Activated naive CD8-positive, alpha-beta T cell treated with anti-CD3 and anti-CD28 coated beads, Interleukin-2, amount 10 ng/mL, durations not matched to agents 7 days and 5 days (primary cell): ENCODE measurements at regions of chr1 and their contacts with region 1.

Region 1: DNA sequence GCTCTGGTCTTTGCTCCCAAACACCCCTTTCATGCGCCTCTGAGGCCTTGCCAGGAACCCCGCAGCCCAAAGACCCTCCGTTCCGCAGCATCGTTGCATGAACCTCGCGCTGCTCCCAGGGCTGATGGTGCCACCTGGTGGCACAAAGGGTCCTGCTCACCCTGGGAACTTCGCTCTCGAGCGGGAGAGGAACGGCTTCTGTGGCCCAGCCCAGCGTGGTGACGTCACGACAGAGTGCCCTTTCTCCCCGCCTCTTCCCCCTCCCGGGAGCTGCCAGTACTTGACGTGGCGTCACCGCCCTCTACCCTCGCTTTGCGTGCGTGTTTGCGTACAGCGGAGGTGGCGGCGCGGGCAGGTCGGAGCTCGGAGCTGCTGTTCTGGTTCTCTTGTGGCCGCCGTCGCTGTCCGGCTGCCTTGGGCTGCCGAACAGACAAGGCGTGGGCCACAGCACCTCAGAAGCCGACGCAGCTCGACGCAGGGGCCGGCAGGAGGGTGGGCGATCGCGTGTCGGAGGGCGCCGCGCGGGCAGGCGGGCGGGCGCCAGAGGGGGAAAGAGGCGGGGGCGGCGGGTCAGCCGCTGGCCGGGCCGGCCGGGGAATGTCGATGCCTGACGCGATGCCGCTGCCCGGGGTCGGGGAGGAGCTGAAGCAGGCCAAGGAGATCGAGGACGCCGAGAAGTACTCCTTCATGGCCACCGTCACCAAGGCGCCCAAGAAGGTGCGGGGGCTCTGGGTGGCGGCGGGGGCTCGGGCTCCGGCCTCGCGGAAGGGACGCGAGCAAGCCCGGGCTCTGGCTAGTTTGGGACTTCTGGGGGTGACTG is at the start of gene AHCYL1:
- DNase-seq: peak; percentile 98
- ATAC-seq: peak; percentile 98
- H3K4me3 Mint-ChIP-seq: peak within 1 kb of the TSS; percentile 98
- H3K27ac Mint-ChIP-seq: peak within 1 kb of the TSS; percentile 95
- H3K4me1 Mint-ChIP-seq: peaks cover 29% of the 10 kb centered on the region
- H3K27me3 Mint-ChIP-seq: peaks cover 2% of the 10 kb centered on the region
- total RNA-seq, gene AHCYL1: 53.6 to 55.4 TPM

Region 2: GRCh38 chr1:109640285-109640865 is 344.3 kb before region 1 on chr1:
- POLR2A ChIA-PET with region 1: interaction called, 11 read pairs
- DNase-seq: peak; percentile 93
- ATAC-seq: peak; percentile 71
- H3K4me3 Mint-ChIP-seq: no peak overlapping the region
- H3K27ac Mint-ChIP-seq: no peak overlapping the region
- H3K4me1 Mint-ChIP-seq: peaks cover 8% of the 10 kb centered on the region
- H3K27me3 Mint-ChIP-seq: peaks cover 3% of the 10 kb centered on the region

Region 3: DNA sequence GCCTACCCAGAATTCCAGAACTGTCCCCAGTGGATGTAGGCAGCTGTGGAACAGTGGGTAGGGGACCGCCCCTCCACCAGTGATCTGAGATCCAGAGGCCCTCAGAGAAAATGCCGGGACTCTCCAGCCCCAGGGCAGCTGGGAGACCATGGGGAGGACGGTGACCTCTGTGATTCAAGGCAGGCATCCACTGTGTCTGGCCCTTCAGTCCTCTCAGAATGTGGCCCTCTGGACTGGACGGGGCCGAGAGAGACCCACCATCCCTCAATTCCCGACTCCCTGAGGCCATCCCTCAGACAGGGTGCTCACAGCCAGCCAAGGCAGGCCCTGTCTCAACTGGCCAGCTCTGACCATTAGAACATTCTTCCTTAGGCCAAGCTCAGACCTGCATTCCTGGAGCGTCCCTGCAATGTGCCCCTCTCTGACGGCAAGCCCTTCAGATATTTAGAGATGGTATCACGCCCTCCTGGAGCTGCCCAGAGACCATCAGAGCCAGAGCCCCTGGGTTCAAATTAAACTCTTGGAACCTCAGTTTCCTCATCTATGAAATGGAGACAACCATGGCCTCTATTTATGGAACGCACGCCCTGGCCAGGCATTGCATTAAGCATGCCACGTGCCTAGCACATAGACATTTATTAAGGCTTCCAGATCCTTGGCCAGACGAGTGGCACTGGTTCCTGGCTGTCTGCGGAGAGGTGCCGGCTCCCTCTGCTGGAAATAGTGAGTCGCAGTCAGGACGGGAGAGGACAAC is 211.3 kb before region 1 on chr1:
- POLR2A ChIA-PET with region 1: interaction called, 34 read pairs
- DNase-seq: peak; percentile 65
- ATAC-seq: peak; percentile 87
- H3K4me3 Mint-ChIP-seq: no peak overlapping the region
- H3K27ac Mint-ChIP-seq: no peak overlapping the region
- H3K4me1 Mint-ChIP-seq: peaks cover 16% of the 10 kb centered on the region
- H3K27me3 Mint-ChIP-seq: peaks cover 3% of the 10 kb centered on the region

Region 4: DNA sequence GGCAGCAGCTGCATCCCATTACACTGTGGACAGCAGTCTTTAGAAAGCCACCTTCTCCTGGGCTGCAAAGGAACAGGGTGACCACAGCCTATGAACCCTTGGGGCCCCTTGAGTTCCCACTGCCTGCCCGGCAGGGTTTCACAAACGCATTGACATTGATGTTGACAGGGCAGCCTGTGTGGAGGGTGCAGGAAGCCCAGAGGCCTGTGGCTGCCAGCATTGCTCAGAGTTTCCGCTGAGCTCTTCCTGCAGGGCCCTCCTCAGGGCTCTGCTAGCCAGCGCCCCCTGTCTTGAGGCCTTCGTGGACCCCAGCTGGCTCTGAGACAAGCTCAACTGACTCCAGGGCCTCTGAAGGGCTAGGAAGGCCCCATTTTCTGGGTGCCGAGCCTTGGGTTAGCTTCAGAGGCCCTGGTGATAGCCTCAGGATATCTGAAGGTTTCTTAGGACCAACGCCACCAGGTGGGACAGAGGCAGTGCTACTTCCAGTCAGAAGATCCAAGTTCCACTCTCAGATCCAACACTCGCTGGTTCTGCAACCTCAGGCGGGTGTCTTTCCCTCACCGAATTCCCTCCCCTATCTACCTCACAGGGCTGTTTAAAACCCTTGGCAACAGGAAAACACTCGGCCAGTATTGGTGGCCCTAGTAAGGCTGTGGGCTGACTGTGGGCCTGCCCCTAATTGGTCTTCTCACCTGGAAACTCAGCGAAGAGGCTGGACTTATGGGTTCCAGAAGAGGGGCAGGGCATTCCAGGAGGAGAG is 193.8 kb before region 1 on chr1:
- POLR2A ChIA-PET with region 1: interaction called, 13 read pairs
- DNase-seq: peak; percentile 86
- ATAC-seq: peak; percentile 97
- H3K4me3 Mint-ChIP-seq: peak overlapping the region; percentile 63
- H3K27ac Mint-ChIP-seq: peak overlapping the region; percentile 85
- H3K4me1 Mint-ChIP-seq: peaks cover 66% of the 10 kb centered on the region
- H3K27me3 Mint-ChIP-seq: no peaks in the 10 kb centered on the region